ENCODE measurements at regions of chr9 and their contacts with region 1.

Region 1: GRCh38 chr9:128034821-128035764 is 32.0 kb downstream of the NAIF1 start:
- DNase-seq: peak; percentile 88
- ATAC-seq: peak; percentile 82
- H3K4me3 ChIP-seq: no peak overlapping the region
- H3K4me3 Mint-ChIP-seq: no peak overlapping the region
- H3K27ac ChIP-seq: no peak overlapping the region
- H3K27ac Mint-ChIP-seq: peak overlapping the region; percentile 71
- H3K4me1 ChIP-seq: peaks cover 29 to 46% of the 10 kb centered on the region in 2 donors
- H3K4me1 Mint-ChIP-seq: peaks cover 33% of the 10 kb centered on the region
- H3K27me3 ChIP-seq: no peaks in the 10 kb centered on the region
- H3K27me3 Mint-ChIP-seq: no peaks in the 10 kb centered on the region
- CTCF ChIP-seq: peak; percentile 93

Region 2: GRCh38 chr9:127930231-127931091 is 104.6 kb before region 1 on chr9 and contains the start of gene PIP5KL1:
- CTCF ChIA-PET with region 1: interaction called, 12 read pairs
- POLR2A ChIA-PET with region 1: no interaction called
- intact Hi-C with region 1: no loop called
- DNase-seq: peak; percentile 86
- ATAC-seq: peak; percentile 75
- H3K4me3 ChIP-seq: peak within 1 kb of the TSS; percentile 31 to 78 (median 64)
- H3K4me3 Mint-ChIP-seq: peak within 1 kb of the TSS; percentile 86
- H3K27ac ChIP-seq: no peak within 1 kb of the TSS
- H3K27ac Mint-ChIP-seq: peak within 1 kb of the TSS; percentile 73
- H3K4me1 ChIP-seq: peaks cover 33 to 41% of the 10 kb centered on the region in 2 donors
- H3K4me1 Mint-ChIP-seq: peaks cover 44% of the 10 kb centered on the region
- H3K27me3 ChIP-seq: peaks cover 0 to 33% (median 13%) of the 10 kb centered on the region in 4 experiments
- H3K27me3 Mint-ChIP-seq: peaks cover 9% of the 10 kb centered on the region
- CTCF ChIP-seq: no peak
- total RNA-seq, gene PIP5KL1: 1.4 and 2.1 TPM in 2 replicates

Region 3: DNA sequence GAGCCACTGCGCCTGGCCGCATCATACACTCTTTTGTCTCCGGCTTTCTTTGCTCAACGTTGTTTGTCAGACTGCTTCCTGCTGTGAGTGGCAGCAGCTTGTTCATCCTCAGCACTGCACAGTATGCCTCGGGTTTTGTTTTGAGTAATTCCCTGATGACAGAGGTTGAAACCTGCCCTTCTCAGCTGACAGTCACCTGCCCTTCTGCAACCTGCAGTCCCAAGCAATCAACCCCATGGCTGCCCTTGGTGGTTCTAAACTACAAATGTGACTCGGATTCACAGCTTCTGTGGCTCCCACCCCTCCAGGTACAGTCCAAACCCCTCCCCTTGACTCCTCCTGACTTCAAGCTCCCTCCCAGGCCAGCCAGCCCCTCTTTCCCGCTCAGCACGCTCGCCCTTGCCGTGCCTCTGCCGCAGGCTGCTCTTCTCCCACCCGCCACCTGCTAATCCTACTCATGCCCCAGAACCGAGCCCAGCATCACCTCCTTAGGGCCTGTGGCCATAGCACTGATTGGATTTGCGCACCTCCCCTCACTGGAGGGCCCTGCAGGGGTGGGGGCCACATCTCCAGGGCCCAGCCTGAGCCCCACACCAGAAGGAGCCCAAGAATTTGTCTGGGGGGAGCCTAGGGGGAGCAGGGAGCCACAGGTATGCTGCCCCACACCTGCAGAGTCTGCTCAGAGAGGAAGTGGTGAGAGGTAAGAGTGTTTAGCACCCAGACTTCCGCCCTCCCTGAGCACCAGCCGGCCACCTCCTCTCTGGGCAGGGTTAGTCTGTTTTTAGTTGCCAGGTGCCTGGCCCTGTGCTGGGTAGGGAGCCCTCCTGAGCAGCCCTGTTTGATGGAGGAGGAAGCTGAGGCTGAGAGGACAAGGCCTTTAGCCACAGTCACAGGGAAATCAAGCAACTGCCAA is 64.4 kb before region 1 on chr9:
- CTCF ChIA-PET with region 1: interaction called, 282 read pairs
- POLR2A ChIA-PET with region 1: interaction called, 212 read pairs
- intact Hi-C with region 1: no loop called
- DNase-seq: peak; percentile 87
- ATAC-seq: peak; percentile 69
- H3K4me3 ChIP-seq: peak overlapping the region in 3 of 5 experiments; percentile 5 to 18 (median 6)
- H3K4me3 Mint-ChIP-seq: peak overlapping the region; percentile 77
- H3K27ac ChIP-seq: peak overlapping the region; percentile 91 to 97
- H3K27ac Mint-ChIP-seq: peak overlapping the region; percentile 96
- H3K4me1 ChIP-seq: peaks cover 99 to 100% of the 10 kb centered on the region in 2 donors
- H3K4me1 Mint-ChIP-seq: peaks cover 98% of the 10 kb centered on the region
- H3K27me3 ChIP-seq: no peaks in the 10 kb centered on the region
- H3K27me3 Mint-ChIP-seq: no peaks in the 10 kb centered on the region
- CTCF ChIP-seq: no peak

Region 4: GRCh38 chr9:128007566-128008138 is 27.4 kb before region 1 on chr9:
- CTCF ChIA-PET with region 1: interaction called, 11 read pairs
- POLR2A ChIA-PET with region 1: interaction called, 3 read pairs
- intact Hi-C with region 1: loop called (anchors 2 kb)
- DNase-seq: peak; percentile 92
- ATAC-seq: peak; percentile 80
- H3K4me3 ChIP-seq: peak overlapping the region in 3 of 5 experiments; percentile 0 to 35 (median 10)
- H3K4me3 Mint-ChIP-seq: peak overlapping the region; percentile 82
- H3K27ac ChIP-seq: peak overlapping the region; percentile 81 to 93
- H3K27ac Mint-ChIP-seq: peak overlapping the region; percentile 91
- H3K4me1 ChIP-seq: peaks cover 56 to 72% of the 10 kb centered on the region in 2 donors
- H3K4me1 Mint-ChIP-seq: peaks cover 60% of the 10 kb centered on the region
- H3K27me3 ChIP-seq: no peaks in the 10 kb centered on the region
- H3K27me3 Mint-ChIP-seq: no peaks in the 10 kb centered on the region
- CTCF ChIP-seq: no peak

Region 5: GRCh38 chr9:128117613-128118471 is 82.7 kb after region 1 on chr9:
- CTCF ChIA-PET with region 1: interaction called, 47 read pairs
- POLR2A ChIA-PET with region 1: no interaction called
- intact Hi-C with region 1: loop called (anchors 1 kb)
- DNase-seq: peak; percentile 94
- ATAC-seq: peak; percentile 52
- H3K4me3 ChIP-seq: no peak overlapping the region
- H3K4me3 Mint-ChIP-seq: no peak overlapping the region
- H3K27ac ChIP-seq: no peak overlapping the region
- H3K27ac Mint-ChIP-seq: peak overlapping the region; percentile 78
- H3K4me1 ChIP-seq: peaks cover 37 to 42% of the 10 kb centered on the region in 2 donors
- H3K4me1 Mint-ChIP-seq: peaks cover 38% of the 10 kb centered on the region
- H3K27me3 ChIP-seq: no peaks in the 10 kb centered on the region
- H3K27me3 Mint-ChIP-seq: no peaks in the 10 kb centered on the region
- CTCF ChIP-seq: peak; percentile 100

Measured in B cell (primary cell).